GM10248 (cell line): ENCODE measurements at regions of chr11 and their contacts with region 1.

Region 1: DNA sequence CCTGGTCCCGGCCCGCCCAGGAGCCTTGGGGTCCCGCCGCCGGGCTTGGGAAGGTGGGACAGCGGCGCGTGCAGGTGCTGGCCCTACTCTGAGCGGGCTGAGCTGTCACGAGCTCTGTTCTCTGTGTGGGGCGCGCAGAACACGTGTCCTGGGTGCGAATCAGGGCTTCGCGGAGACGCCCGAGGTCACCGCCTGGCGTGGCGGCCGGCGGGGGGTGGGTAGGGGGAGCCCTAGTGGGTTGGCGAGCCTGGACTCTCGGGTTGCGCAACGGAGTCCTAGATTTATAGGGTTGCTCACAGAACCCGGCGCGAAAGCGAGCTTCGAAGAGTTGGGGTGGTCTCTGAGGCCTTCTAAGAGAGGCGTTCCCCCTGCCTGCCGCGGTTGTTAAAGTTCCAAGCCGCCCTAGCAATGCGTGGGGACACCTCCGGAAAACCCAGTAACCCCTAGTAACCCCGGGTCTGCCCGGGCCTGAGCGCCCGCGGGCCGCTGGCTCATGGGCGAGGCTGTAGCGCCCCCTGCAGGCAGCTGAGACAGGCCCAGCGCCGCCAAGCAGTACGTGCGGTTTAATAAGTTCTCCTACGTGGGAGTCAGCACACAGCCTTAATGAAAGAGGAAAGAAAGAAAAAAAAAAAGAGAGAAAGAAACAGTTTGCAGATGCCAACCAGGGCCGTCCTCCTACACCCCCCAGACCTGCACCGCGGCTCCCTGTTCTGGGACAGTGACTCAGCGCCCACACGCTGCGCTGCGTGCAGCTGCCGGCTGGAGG is 2.8 kb downstream of the ADM start:
- DNase-seq: peak; percentile 81
- CTCF ChIP-seq: peak; percentile 96

Region 2: GRCh38 chr11:9757809-9758636 is 549.6 kb before region 1 on chr11:
- CTCF ChIA-PET with region 1: interaction called, 26 read pairs
- POLR2A ChIA-PET with region 1: interaction called, 3 read pairs
- DNase-seq: peak; percentile 97
- CTCF ChIP-seq: peak; percentile 92

Region 3: DNA sequence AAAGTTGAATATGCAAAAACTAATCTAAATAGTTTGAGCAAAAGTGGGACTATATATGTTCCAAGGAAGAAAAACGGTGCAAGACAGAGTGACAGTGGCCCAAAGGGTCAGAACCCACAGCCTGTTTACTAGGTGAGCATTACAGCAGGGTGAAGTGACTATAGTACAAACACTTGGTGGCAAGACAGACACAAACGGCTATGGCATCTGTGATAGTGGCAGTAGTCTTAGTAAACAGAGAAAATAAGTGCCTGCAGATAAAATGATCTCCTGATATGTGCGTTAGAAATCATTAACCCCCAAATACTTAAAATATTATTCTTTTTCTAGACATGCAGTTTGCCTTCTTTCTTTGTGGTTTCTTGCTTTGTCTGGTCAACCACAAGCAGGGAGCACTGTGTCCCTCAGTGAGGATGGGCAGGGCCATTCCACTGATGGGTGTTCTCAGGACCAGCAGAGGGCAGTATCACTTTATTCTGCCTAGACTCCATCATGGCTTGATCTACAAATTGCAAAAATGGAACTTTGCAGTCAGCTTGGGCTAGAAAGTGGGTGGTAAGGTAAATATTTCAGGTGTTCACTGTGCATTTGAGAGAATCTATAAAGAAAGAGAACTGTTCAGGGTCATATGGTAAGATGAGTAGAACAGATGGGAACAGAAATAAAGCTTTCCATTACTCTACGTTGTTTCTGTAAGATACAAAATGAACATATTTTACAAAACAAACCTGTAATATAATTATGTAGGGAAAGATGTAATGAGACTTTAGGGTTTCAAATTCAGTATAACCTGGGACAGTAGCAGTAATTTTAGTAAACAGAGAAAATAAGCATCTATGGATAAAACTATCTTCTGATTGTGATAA is 445.5 kb before region 1 on chr11:
- CTCF ChIA-PET with region 1: interaction called, 13 read pairs
- POLR2A ChIA-PET with region 1: no interaction called
- DNase-seq: peak; percentile 65
- CTCF ChIP-seq: peak; percentile 86

Region 4: DNA sequence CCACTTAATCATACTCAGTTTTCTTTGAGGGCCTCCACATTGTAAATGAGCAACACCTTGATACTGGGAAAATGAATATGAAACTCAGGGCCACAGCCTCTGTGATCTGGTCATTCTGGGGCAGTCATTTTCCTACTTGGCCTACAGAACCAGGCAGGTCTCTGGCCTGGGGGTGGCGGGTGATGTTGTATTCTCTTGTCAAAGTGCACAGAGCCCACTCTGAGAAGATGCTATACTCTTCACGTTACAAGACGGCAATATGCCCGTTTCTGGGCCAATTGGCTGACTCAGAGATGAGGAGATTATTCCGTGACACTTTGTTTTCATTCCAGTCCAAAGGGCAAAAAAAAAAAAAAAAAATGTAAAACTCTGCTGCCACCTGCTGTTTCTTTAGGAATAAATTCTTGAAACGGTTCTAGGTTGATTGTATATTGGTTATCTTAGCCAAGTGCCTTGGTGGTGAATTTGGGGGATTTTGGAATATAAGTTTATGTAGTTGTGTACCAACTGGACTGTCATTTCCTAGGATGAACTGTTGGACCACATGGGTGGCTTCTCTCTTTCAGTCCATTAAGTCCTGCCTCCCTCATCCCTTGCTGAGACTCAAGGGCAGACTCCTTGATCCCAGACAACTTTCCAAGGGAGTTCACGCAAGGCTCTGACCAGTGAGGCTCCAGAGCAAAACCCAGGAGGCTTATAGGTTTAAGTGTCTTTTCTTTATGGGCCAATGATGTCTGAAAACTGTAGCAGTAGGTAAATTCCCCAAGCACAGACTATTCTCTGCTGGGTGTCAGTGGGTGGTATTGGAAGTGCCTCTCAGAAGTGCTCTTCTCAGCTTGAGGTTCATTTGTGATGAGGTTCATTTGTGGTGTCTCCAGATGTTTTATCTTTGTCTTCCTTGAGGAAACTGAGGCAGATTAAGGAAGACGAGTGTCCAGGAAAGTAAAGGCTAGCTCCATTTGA is 15.5 kb after region 1 on chr11:
- CTCF ChIA-PET with region 1: interaction called, 86 read pairs
- POLR2A ChIA-PET with region 1: interaction called, 4 read pairs
- DNase-seq: peak; percentile 51
- CTCF ChIP-seq: peak; percentile 27